ENCODE measurements at regions of chr5 and their contacts with region 1.

Region 1: DNA sequence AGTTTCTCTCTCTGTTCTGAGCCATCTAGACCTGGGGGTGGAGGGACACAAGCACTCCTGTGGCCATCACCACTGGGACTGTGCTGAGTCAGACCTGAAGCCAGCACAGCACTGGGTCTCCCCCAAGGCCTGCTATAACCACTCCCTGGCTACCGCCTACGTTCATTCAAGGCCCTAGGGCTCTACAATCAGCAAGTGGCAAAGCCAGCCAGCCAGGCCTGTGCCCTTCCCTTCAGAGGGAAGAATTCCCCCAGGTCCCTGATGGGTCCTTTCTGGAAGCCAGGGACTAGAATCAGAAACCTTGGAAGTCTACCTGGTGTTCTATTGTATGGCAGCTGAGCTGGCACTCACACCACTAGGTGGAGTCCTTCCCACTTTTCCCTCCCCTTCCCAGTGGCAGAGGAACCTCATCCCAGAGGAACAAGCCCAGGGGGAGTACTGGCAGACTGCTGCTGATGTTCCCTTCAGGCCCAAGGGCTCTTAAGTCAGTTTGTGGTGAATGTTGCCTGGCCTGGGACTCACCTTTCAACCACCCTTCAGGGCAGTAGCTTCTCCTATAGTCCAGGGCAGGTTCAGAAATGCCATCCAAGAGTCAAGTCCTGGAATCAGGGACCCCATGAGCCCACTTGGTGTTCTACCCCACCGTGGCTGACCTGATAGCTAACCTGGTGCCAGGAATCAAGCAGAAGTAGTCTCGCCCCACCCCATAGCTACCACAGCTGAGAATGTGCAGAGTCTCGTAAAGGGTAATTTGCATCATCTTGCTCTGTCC is 20.0 kb downstream of the JMY start:
- DNase-seq: peak; percentile 48
- H3K4me3 ChIP-seq: no peak overlapping the region
- H3K27ac ChIP-seq: no peak overlapping the region
- H3K4me1 ChIP-seq: no peaks in the 10 kb centered on the region
- H3K27me3 ChIP-seq: no peaks in the 10 kb centered on the region
- CTCF ChIP-seq: peak; percentile 74 to 76
- POLR2A ChIP-seq: no peak

Region 2: GRCh38 chr5:79318935-79319614 is 63.1 kb after region 1 on chr5:
- CTCF ChIA-PET with region 1: no interaction called
- POLR2A ChIA-PET with region 1: no interaction called
- dilution Hi-C with region 1: no loop called
- intact Hi-C with region 1: no loop called
- DNase-seq: peak; percentile 14
- H3K4me3 ChIP-seq: no peak overlapping the region
- H3K27ac ChIP-seq: no peak overlapping the region
- H3K4me1 ChIP-seq: no peaks in the 10 kb centered on the region
- H3K27me3 ChIP-seq: no peaks in the 10 kb centered on the region
- CTCF ChIP-seq: no peak
- POLR2A ChIP-seq: no peak

Region 3: GRCh38 chr5:79464695-79465332 is 208.8 kb after region 1 on chr5:
- CTCF ChIA-PET with region 1: interaction called, 10 read pairs
- POLR2A ChIA-PET with region 1: interaction called, 3 read pairs
- dilution Hi-C with region 1: no loop called
- intact Hi-C with region 1: loop called (anchors 1 kb)
- DNase-seq: peak; percentile 38
- H3K4me3 ChIP-seq: no peak overlapping the region
- H3K27ac ChIP-seq: no peak overlapping the region
- H3K4me1 ChIP-seq: no peaks in the 10 kb centered on the region
- H3K27me3 ChIP-seq: no peaks in the 10 kb centered on the region
- CTCF ChIP-seq: peak; percentile 32 to 43
- POLR2A ChIP-seq: no peak

Region 4: DNA sequence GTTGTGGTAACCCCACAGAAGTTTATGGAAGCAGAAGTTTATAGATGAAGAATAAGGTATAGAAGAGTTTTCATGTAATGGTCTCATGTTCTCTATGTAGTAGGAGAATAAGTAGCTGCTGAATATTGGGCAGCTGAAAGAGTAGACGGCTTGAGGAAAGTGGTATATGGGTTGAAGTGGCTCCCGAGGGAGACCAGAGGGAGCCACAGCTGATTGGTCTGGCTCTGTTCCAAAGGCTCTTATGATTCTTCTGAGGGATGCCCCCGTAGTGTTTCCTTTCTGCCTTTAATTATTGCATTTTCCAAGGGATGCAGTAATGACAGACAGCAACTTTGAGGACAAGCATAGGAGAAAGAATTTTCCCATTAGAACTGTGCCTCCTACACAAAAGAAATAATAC is 326.2 kb after region 1 on chr5:
- CTCF ChIA-PET with region 1: no interaction called
- POLR2A ChIA-PET with region 1: no interaction called
- dilution Hi-C with region 1: no loop called
- intact Hi-C with region 1: no loop called
- DNase-seq: no peak
- H3K4me3 ChIP-seq: no peak overlapping the region
- H3K27ac ChIP-seq: no peak overlapping the region
- H3K4me1 ChIP-seq: no peaks in the 10 kb centered on the region
- H3K27me3 ChIP-seq: no peaks in the 10 kb centered on the region
- CTCF ChIP-seq: no peak
- POLR2A ChIP-seq: no peak

Region 5: GRCh38 chr5:79663212-79663611 is 407.2 kb after region 1 on chr5:
- CTCF ChIA-PET with region 1: no interaction called
- POLR2A ChIA-PET with region 1: no interaction called
- dilution Hi-C with region 1: no loop called
- intact Hi-C with region 1: no loop called
- DNase-seq: no peak
- H3K4me3 ChIP-seq: no peak overlapping the region
- H3K27ac ChIP-seq: no peak overlapping the region
- H3K4me1 ChIP-seq: no peaks in the 10 kb centered on the region
- H3K27me3 ChIP-seq: no peaks in the 10 kb centered on the region
- CTCF ChIP-seq: no peak
- POLR2A ChIP-seq: no peak

Region 6: DNA sequence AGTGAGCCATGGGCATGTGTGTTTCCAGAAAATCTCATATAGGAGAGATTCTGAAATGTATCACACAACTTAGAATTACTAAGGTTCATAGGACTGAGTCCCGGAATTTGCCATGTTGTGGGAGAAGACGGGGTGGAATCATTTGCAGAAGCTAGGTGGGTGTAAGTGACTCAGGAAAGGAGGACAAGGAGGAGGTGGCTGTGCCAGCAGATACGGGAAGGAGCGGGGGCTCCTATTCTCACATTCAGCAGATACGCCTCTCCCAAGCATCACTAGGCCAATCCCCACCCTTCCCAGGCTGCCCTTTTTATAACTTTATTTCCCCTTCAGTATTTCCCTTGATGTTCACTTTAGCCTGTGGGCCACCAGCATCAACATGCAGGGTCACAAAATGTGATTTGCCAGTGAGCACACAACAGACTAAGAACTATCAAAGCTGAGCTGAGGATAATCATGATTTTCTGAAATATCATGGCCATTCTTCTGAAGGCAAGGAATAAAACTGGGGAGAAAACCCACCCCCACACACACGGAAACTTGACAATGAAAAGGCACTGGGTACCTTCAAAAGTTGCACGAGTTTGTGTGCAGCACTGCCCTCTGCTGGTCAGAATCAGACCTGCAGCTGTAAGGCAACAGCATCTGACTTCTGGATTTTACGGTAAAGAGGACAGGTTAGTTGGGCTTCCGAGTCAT is 601.9 kb after region 1 on chr5:
- CTCF ChIA-PET with region 1: no interaction called
- POLR2A ChIA-PET with region 1: no interaction called
- dilution Hi-C with region 1: no loop called
- intact Hi-C with region 1: loop called (anchors 5 kb)
- DNase-seq: peak; percentile 66
- H3K4me3 ChIP-seq: no peak overlapping the region
- H3K27ac ChIP-seq: no peak overlapping the region
- H3K4me1 ChIP-seq: no peaks in the 10 kb centered on the region
- H3K27me3 ChIP-seq: no peaks in the 10 kb centered on the region
- CTCF ChIP-seq: peak; percentile 92 to 94
- POLR2A ChIP-seq: no peak

Measured in endothelial cell of umbilical vein (primary cell).